BJ (cell line): ENCODE measurements at regions of chr3 and their contacts with region 1.

Region 1: DNA sequence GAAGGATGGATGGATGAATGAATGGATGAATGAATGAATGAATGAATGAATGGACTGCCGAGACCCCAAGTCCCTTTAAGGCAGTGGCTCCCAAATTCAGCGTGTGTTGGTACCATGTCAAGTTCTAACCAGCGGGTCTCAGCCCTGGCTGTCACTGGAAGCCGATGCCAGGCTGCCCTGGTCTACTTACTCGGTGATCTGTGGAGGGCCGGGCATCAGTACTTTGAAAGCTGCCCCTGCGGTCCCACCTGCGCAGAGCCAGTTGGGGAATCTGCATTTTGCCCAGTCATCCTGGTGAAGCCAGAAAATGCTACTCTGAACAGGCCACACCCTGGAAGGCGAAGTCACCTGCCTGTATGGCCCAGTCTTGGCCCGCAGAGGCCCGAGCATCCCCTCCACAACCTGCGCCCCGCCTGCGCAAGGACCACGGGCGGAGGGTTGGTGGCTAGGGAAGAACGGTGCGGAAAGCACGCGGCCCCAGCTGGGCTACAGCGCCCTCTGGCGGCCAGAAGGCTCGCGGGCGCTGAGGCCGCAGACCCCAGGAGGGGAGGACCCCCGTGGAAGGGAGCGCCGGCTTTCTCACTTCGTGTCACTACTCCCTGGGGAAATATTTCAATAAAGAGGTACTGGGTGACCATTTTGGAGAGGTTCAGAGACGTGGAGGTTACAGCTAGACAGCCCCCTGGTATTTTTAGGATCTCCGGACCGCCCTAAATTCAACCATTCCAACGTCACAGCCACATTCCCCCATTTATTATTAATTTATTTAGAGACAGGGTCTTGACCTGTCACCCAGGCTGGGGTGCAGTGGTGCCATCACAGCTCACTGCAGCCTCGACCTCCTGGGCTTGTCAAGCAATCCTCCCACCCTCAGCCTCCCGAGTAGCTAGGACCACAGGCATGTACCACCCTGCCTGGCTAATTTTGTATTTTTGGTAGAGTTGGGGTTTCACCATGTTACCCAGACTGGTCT is 34.9 kb downstream of the PRKCD start:
- DNase-seq: no peak
- H3K4me3 ChIP-seq: no peak overlapping the region
- H3K27me3 ChIP-seq: no peaks in the 10 kb centered on the region
- CTCF ChIP-seq: peak; percentile 100

Region 2: DNA sequence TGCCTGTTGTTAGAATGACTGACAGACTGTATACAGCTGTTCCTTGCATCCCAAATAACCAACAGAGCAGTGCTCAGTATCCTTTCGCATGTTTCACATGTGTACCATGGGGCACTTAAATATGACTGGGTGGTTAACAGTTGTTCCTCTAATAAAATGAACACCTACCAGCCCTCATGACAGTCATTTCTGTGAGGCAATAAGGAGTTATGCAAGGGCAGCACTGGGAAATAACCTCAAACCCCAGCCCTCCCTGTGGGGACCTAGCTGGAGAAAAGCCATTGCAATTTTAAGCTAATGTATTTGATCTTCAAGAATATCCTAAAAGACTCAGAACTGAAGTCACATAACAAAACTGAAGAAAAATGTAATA is 73.0 kb before region 1 on chr3:
- CTCF ChIA-PET with region 1: interaction called, 89 read pairs
- POLR2A ChIA-PET with region 1: no interaction called
- DNase-seq: no peak
- H3K4me3 ChIP-seq: no peak overlapping the region
- H3K27me3 ChIP-seq: no peaks in the 10 kb centered on the region
- CTCF ChIP-seq: no peak

Region 3: GRCh38 chr3:53140847-53141845 is 54.7 kb before region 1 on chr3:
- CTCF ChIA-PET with region 1: interaction called, 206 read pairs
- POLR2A ChIA-PET with region 1: no interaction called
- DNase-seq: no peak
- H3K4me3 ChIP-seq: no peak overlapping the region
- H3K27me3 ChIP-seq: no peaks in the 10 kb centered on the region
- CTCF ChIP-seq: no peak

Region 4: GRCh38 chr3:53170325-53171063 is 25.4 kb before region 1 on chr3:
- CTCF ChIA-PET with region 1: interaction called, 20 read pairs
- POLR2A ChIA-PET with region 1: no interaction called
- DNase-seq: no peak
- H3K4me3 ChIP-seq: no peak overlapping the region
- H3K27me3 ChIP-seq: no peaks in the 10 kb centered on the region
- CTCF ChIP-seq: no peak

Region 5: GRCh38 chr3:53865732-53866499 is 670.0 kb after region 1 on chr3:
- CTCF ChIA-PET with region 1: no interaction called
- POLR2A ChIA-PET with region 1: no interaction called
- DNase-seq: no peak
- H3K4me3 ChIP-seq: no peak overlapping the region
- H3K27me3 ChIP-seq: no peaks in the 10 kb centered on the region
- CTCF ChIP-seq: no peak

Region 6: DNA sequence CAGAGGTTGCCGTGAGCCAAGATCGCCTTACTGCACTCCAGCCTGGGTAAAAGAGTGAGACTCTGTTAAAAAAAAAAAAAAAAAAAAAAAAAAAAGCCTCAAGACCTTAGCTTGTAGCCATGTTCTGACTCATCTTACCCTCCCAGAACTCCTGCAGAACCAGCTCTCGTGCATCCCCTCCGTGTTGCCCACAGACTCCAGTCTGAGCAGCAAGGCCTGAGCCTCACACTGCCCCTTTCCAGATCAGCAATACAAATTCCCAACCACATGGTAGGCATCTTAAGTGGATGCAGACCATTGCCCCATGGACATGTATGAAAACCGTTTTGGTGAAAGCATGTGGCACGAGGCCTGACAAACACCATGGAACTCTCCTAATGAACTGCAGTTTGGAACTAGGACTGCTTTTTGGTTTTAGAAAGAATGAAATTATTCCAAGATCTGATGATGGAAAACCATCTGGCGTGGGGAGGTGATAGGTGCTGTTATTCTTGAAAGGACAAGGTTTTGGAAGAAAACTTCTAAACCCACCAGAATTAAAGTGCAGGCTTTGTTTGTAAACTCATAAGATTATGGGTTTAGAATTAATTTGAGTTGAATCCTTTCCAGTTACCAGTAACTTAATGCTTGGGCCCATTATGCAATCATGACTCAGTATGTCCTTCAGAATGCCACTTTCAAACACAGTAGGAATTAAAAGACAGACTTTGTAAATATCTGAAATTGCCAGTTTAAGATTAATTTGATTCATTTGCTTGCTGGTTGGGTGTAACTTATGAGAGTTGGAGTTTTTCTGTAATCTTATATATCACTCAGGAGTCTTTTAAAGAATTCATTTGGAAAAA is 1895.7 kb after region 1 on chr3:
- CTCF ChIA-PET with region 1: no interaction called
- POLR2A ChIA-PET with region 1: no interaction called
- DNase-seq: peak; percentile 32
- H3K4me3 ChIP-seq: no peak overlapping the region
- H3K27me3 ChIP-seq: peaks cover under 1% of the 10 kb centered on the region
- CTCF ChIP-seq: no peak